ENCODE measurements at regions of chr17 and their contacts with region 1.

Region 1: DNA sequence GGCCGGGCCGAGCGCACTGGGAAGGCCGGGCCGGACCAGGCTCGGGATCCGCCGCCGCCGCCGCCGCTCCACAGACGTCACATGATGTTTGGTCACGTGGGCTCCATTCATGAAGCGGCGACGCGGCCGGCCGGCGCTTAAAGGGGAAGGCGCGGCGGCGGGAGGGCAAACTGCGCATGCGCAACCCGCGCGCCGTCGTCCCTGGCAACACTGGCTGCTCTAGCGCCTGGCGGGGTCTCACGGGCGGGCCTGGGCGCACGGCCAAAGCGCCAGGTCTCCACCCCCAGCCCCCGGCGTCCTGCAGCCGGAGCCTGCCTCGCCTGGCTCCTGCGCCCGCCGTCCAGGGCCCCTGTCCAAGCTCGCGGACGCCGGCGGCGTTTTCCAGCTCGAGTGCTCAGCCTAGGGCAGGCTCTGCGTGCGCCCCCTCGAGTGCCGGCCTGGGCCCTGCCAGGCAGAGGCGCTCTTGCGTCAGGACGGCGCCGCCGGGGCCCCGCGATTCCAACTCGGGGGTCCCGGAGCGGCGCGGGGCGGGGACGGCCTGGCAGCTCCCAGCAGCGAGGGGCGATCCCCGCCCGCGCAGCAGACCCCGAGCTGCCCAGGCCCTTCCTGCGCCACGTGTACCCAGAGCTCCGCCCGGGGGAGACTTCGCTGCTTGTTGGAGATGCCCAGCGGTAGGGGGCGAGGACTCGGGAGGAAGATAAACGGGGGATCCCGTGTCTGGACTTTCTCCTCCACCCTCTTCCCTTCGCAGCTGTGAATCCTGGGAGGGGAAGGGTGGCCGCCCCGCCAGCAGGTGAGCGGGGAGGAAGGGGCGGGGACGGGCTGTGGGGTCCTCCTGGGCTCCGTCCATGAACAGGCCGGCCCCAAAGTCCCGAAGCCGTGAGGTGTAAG is at the start of gene MAFG:
- DNase-seq: peak; percentile 91 to 96 (median 93)
- ATAC-seq: peak; percentile 33 to 70 (median 59)
- H3K4me3 ChIP-seq: peak within 1 kb of the TSS; percentile 84 to 98 (median 94)
- H3K27ac ChIP-seq: peak within 1 kb of the TSS; percentile 86 to 99 (median 95)
- H3K4me1 ChIP-seq: peaks cover 21 to 51% (median 41%) of the 10 kb centered on the region in 12 donors
- H3K27me3 ChIP-seq: peaks cover 0 to 14% (median 0%) of the 10 kb centered on the region in 9 donors
- CTCF ChIP-seq: peak in 7 of 12 donors; percentile 11 to 51 (median 31)
- POLR2A ChIP-seq: peak; percentile 27 to 69
- total RNA-seq, gene MAFG: 14.3 to 30.5 (median 18.0) TPM

Region 2: DNA sequence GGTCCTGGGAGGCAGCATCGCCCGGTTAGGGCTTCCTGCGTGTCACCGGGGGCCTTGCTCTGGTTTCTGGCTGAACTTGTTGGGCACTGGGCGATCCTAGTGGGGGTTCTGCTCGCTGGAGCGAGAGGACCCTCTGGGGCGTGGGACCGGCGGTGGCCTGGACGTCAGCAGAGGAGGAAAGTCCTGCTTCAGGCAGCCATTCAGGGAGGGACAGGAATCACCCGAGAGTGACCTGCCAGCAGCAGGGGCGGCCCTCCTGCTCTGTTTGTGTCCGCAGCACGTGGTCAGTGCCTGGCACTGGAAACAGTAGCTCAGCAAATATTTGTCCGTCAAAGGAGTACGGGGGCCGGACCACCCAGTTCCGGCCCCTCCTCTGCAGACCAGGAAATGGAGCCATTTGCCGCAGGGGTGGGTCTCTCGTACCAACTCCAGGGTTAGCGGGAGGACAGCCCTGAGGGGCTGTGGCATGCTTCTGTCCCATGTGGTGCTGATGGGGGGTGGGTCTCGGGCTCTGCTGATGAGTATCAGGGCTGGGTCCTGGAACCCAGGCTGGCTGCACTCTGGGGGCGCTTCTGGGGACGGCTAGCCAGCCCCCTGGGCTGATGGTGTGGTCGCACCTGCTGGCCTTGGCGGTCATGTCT is 844.7 kb before region 1 on chr17:
- intact Hi-C with region 1: no loop called
- DNase-seq: peak in 3 of 5 donors; percentile 55 to 57 (median 56)
- ATAC-seq: peak; percentile 7 to 59 (median 26)
- H3K4me3 ChIP-seq: peak overlapping the region in 1 of 12 donors; percentile 9
- H3K27ac ChIP-seq: peak overlapping the region; percentile 15 to 81 (median 66)
- H3K4me1 ChIP-seq: peaks cover 0 to 48% (median 28%) of the 10 kb centered on the region in 12 donors
- H3K27me3 ChIP-seq: no peaks in the 10 kb centered on the region
- CTCF ChIP-seq: no peak
- POLR2A ChIP-seq: no peak

Region 3: DNA sequence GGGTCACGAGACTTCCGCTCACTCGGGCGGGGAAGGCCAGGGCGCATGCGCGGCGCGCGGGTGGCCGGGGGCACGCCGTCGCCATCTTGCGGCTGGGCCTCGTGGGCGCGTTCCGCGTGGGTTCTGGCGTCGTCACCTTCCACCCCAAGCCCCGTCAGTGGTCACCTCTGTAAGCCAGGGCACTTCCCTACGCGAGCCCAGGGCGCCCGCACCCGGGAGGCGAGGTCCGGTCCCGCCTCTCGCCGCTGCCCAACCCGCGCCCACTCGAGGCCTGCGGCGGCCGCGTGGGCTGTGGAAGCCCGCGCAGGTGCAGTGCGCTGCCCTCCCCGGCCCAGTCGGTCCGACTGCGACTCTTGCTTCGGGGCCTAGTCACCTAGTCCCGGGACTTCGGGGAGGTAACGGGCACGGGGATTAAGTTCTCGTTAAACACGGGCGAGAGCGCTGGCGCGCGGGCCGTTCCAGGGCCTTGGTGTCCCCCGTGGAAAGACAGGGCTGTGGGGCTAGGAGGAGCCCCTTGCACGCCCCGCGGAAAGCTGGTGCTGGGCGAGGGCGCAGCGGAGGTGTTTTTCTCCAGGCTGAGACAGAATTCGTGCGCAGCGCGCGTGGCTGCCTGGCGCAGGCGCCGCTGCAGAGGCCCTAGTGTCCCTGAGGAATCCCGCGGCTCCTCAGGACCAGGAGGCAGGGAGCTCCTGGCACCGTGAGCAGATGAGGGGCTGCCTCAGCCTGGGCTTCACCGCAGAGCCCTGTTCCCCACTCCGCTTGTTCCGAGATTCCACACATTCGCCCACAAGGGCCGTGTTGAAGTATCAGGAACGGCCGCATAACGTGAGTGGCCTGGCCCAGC is 56.3 kb before region 1 on chr17:
- intact Hi-C with region 1: loop called in 1 of 10 experiments (anchors 5 kb)
- DNase-seq: peak; percentile 95 to 98 (median 96)
- ATAC-seq: peak; percentile 12 to 40 (median 38)
- H3K4me3 ChIP-seq: peak overlapping the region; percentile 54 to 100 (median 95)
- H3K27ac ChIP-seq: peak overlapping the region; percentile 92 to 100 (median 98)
- H3K4me1 ChIP-seq: peaks cover 4 to 55% (median 48%) of the 10 kb centered on the region in 12 donors
- H3K27me3 ChIP-seq: no peaks in the 10 kb centered on the region
- CTCF ChIP-seq: peak in 11 of 12 donors; percentile 6 to 73 (median 52)
- POLR2A ChIP-seq: peak in 1 of 2 donors; percentile 95

Region 4: DNA sequence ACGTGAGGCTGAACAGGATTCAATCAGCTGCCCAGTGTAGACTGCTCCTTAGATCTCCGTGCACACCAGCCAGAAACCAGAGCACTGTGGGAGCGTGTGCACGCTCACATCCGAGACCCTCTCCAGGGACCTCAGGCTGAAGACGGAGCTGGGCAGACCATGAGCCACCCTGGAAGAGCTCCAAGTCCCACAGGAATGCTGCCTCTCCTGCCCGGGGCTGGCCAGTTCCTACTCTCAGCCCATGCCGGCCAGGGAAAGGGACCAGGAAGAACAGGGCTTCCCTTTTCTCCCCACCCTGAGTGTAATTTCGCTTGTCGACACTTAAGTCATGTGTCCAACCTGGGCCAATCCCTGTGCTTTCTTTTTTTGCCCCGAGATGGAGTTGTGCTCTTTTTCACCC is 43.4 kb before region 1 on chr17:
- intact Hi-C with region 1: loop called in 1 of 10 experiments (anchors 5 kb)
- DNase-seq: peak in 1 of 5 donors; percentile 20
- ATAC-seq: peak in 3 of 4 donors; percentile 27 to 51 (median 38)
- H3K4me3 ChIP-seq: no peak overlapping the region
- H3K27ac ChIP-seq: no peak overlapping the region
- H3K4me1 ChIP-seq: peaks cover 0 to 18% (median 3%) of the 10 kb centered on the region in 12 donors
- H3K27me3 ChIP-seq: no peaks in the 10 kb centered on the region
- CTCF ChIP-seq: no peak
- POLR2A ChIP-seq: no peak

Measured in heart left ventricle (tissue), 16 donors.